ENCODE measurements at regions of chr2 and their contacts with region 1.

Region 1: GRCh38 chr2:53949457-53949856 is 21.3 kb downstream of the PSME4 start:
- DNase-seq: no peak
- H3K4me3 ChIP-seq: no peak overlapping the region
- H3K4me3 Mint-ChIP-seq: no peak overlapping the region
- H3K27ac Mint-ChIP-seq: no peak overlapping the region
- H3K4me1 ChIP-seq: no peaks in the 10 kb centered on the region; the same call in 1 of the 2 replicates
- H3K4me1 Mint-ChIP-seq: no peaks in the 10 kb centered on the region
- H3K27me3 ChIP-seq: no peaks in the 10 kb centered on the region
- H3K27me3 Mint-ChIP-seq: no peaks in the 10 kb centered on the region
- CTCF ChIP-seq: no peak

Region 2: DNA sequence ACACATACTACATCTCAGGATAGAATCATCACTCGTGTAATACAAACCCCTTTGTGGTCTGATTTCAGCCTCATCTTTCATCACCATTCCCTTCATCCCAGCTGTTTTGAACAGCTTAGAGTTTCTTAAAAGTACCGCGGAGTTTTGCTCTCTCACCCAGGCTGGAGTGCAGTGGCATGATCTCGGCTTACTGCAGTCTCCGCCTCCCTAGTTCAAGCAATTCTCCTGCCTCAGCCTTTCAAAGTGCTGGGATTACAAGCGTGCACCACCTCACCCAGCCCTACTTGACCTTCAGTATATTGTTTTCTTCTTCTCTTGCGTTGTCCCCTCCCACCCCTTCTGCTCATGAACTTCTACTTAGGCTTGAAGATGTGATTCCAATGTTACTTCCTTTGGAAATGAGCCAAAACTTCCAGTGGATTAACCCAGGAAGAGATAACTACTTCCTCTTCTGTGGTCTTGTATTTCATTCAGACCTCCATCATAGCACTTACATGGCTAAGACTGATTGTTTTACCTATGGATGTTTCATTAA is 146.8 kb before region 1 on chr2:
- CTCF ChIA-PET with region 1: no interaction called
- POLR2A ChIA-PET with region 1: no interaction called
- intact Hi-C with region 1: no loop called
- DNase-seq: no peak
- H3K4me3 ChIP-seq: no peak overlapping the region
- H3K4me3 Mint-ChIP-seq: no peak overlapping the region
- H3K27ac Mint-ChIP-seq: no peak overlapping the region
- H3K4me1 ChIP-seq: no peaks in the 10 kb centered on the region
- H3K4me1 Mint-ChIP-seq: no peaks in the 10 kb centered on the region
- H3K27me3 ChIP-seq: no peaks in the 10 kb centered on the region
- H3K27me3 Mint-ChIP-seq: no peaks in the 10 kb centered on the region
- CTCF ChIP-seq: no peak

Region 3: DNA sequence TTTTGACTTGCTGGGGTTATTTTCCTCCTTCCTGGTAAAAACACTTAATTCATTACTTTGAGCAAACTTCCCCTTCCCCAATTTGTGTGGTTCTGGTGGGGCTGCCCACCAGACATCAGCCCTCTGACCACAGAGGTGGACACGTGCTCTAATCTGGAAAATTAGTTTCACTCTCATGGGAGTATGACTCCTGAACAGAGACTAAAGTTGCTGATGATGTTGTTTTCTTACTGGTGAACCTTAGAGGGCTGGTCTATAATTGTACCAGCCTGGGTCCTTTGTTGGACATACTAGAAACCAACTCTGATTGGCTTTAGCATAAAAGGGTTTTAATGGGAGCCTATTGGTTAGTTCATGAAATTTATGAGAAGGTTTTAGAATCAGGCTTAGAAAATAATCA is 111.8 kb after region 1 on chr2:
- CTCF ChIA-PET with region 1: no interaction called
- POLR2A ChIA-PET with region 1: interaction called, 10 read pairs
- intact Hi-C with region 1: no loop called
- DNase-seq: no peak
- H3K4me3 ChIP-seq: no peak overlapping the region
- H3K4me3 Mint-ChIP-seq: no peak overlapping the region
- H3K27ac Mint-ChIP-seq: no peak overlapping the region
- H3K4me1 ChIP-seq: no peaks in the 10 kb centered on the region
- H3K4me1 Mint-ChIP-seq: no peaks in the 10 kb centered on the region
- H3K27me3 ChIP-seq: no peaks in the 10 kb centered on the region
- H3K27me3 Mint-ChIP-seq: no peaks in the 10 kb centered on the region
- CTCF ChIP-seq: no peak

Region 4: DNA sequence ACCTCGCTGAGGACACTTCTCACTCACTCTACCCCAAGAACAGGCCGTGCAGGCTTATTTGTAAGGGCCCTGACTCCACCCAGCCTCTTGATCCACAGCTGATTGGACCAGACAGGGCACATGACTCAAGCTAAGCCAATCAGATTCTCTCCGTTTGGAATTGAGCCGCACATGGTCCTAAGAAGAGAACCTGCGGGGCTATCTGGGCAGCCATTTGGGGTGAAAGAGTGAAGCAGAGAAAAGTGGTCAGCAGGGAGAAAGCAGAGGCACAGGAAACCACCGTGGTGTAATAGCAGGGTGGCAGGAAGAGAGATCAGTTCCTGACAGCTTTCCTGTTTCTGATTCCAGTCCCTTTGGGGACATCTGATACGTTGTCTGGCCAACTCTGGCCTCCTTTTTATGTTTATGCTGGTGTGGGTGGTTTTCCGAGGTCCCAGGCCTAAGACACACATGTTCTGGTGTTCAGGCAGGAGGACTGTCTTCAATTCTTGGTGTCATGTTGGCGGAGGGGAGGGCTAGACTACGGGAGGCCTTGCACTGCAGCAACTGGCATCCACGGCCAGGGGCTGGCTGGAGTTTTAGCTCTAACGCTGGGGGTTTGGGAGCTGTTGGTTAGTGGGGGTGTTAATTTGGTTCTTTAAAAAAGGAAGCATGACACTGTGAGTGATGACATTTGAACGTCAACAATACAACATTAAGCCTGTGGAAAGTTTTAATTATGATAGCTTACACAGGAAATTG is 480.5 kb after region 1 on chr2:
- CTCF ChIA-PET with region 1: no interaction called
- POLR2A ChIA-PET with region 1: no interaction called
- intact Hi-C with region 1: no loop called
- DNase-seq: no peak
- H3K4me3 ChIP-seq: no peak overlapping the region
- H3K4me3 Mint-ChIP-seq: no peak overlapping the region
- H3K27ac Mint-ChIP-seq: no peak overlapping the region
- H3K4me1 ChIP-seq: no peaks in the 10 kb centered on the region
- H3K4me1 Mint-ChIP-seq: no peaks in the 10 kb centered on the region
- H3K27me3 ChIP-seq: no peaks in the 10 kb centered on the region
- H3K27me3 Mint-ChIP-seq: no peaks in the 10 kb centered on the region
- CTCF ChIP-seq: no peak

Region 5: DNA sequence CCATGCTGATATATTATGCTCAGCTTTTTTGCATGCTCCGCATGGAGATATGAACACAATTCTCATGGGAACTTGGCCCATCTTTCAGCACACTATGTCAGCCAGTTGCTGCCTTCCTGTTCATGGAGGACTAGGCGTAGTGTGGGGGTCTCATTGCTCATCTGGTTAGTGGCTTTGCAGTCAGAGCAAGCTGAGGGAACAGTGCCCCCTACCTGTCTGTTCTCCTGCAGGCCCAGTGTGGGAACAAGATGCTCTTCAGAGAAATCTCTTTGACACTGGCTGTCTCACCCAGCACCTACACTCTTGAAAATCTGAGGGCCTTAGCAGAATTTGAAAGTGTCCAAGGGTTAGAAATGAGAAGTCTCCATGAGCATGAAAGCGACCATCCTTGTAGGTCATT is 553.7 kb after region 1 on chr2:
- CTCF ChIA-PET with region 1: no interaction called
- POLR2A ChIA-PET with region 1: no interaction called
- intact Hi-C with region 1: no loop called
- DNase-seq: peak in 1 of 2 experiments; percentile 40
- H3K4me3 ChIP-seq: no peak overlapping the region
- H3K4me3 Mint-ChIP-seq: no peak overlapping the region
- H3K27ac Mint-ChIP-seq: no peak overlapping the region
- H3K4me1 ChIP-seq: no peaks in the 10 kb centered on the region
- H3K4me1 Mint-ChIP-seq: peaks cover 12% of the 10 kb centered on the region
- H3K27me3 ChIP-seq: no peaks in the 10 kb centered on the region
- H3K27me3 Mint-ChIP-seq: no peaks in the 10 kb centered on the region
- CTCF ChIP-seq: peak; percentile 45 to 46

Region 6: DNA sequence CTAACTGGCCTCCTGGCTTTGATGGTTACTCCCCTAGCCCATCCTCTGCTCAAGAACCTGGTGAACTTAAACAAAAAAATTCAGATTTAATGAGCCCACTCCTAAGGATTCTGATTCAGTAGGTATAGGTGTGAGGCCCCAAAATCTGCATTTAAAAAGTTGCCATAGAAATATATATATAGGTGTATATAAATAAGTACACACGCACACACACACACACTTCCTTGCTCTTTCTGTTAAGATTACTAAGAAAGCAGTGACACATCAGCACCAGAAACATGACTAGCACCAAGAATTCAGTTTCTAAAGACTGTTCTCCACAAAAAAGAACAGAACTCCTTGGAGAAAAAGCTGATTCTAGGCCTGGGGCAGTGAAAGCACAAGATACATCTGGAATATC is 791.8 kb after region 1 on chr2:
- CTCF ChIA-PET with region 1: no interaction called
- POLR2A ChIA-PET with region 1: no interaction called
- intact Hi-C with region 1: no loop called
- DNase-seq: no peak
- H3K4me3 ChIP-seq: no peak overlapping the region
- H3K4me3 Mint-ChIP-seq: no peak overlapping the region
- H3K27ac Mint-ChIP-seq: no peak overlapping the region
- H3K4me1 ChIP-seq: peaks cover 5% of the 10 kb centered on the region; the same call in 1 of the 2 replicates
- H3K4me1 Mint-ChIP-seq: peaks cover 22% of the 10 kb centered on the region
- H3K27me3 ChIP-seq: no peaks in the 10 kb centered on the region
- H3K27me3 Mint-ChIP-seq: no peaks in the 10 kb centered on the region
- CTCF ChIP-seq: no peak